PC-9 (cell line): ENCODE measurements at regions of chr1 and their contacts with region 1.

Region 1: GRCh38 chr1:212608209-212608955 is at the start of gene ATF3:
- DNase-seq: peak; percentile 89 to 99
- H3K4me3 ChIP-seq: peak within 1 kb of the TSS; percentile 96
- H3K27ac ChIP-seq: peak within 1 kb of the TSS; percentile 72
- H3K4me1 ChIP-seq: peaks cover 28% of the 10 kb centered on the region
- H3K27me3 ChIP-seq: peaks cover 57% of the 10 kb centered on the region
- CTCF ChIP-seq: no peak
- total RNA-seq, gene ATF3: 10.2 and 10.8 TPM in 2 replicates

Region 2: DNA sequence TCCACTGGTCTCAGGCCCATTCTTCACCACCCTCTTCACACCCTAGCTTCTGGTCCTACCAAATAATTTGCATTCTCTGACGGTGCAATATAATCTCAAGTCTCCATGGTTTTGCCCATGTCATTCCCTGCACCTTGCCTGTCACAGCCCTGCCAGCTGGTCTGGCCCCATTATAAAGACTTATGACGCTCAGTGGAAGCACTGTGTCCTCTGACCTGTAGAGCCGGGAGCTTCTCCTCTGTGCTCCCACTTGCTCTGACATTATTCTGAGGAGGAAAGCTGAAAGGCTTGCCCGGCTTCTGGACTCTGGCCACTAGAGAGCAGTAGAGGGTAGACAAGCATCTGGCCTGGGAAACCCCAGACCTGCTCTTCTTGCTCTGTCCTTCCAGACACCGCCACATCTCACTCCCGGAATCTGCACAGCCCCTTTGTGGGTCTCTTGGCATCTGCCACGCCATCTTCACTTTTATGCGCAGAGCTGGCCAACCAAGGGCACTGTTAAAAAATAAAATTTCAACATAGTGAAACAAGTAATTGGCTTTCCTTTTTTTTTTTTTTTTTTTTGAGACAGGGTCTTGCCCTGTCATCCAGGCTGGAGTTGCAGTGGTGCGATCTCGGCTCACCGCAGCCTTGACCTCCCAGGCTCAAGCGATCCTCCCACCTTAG is 131.2 kb before region 1 on chr1:
- CTCF ChIA-PET with region 1: interaction called, 4 read pairs
- POLR2A ChIA-PET with region 1: interaction called, 42 read pairs
- intact Hi-C with region 1: loop called (anchors 1 kb)
- DNase-seq: peak; percentile 74 to 81
- H3K4me3 ChIP-seq: no peak overlapping the region
- H3K27ac ChIP-seq: no peak overlapping the region
- H3K4me1 ChIP-seq: peaks cover 12% of the 10 kb centered on the region
- H3K27me3 ChIP-seq: no peaks in the 10 kb centered on the region
- CTCF ChIP-seq: peak; percentile 92

Region 3: DNA sequence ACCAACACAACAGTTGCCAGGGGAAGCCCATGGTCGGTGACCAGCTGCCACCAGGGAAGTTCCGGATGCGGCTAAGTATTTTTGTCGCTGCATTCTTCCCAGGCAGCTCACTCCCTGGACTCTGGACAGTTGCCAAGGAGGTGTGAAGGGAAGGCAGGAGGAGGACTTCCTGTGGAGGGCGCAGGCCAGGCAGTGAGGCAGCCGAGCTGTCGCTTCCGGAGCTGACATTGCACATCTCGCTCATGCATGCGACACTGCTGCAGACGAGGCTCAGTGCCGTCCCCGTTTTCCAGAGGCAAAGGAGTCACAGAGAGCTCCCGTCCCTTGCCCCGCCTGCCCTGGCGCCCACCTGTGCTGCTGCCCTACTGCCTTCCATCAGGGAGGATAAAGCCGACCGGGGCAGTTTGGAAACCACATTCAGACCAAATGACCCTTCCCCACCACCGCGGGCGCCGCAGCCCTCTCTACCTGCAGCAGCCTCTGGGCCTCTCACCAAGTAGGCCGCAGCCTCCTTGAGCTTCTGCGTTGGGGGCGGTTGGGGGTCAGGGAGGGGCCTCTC is 94.2 kb before region 1 on chr1:
- CTCF ChIA-PET with region 1: no interaction called
- POLR2A ChIA-PET with region 1: no interaction called
- intact Hi-C with region 1: loop called (anchors 1 kb)
- DNase-seq: peak; percentile 83 to 96
- H3K4me3 ChIP-seq: peak overlapping the region; percentile 25; the same call in 1 of the 2 replicates
- H3K27ac ChIP-seq: peak overlapping the region; percentile 76
- H3K4me1 ChIP-seq: peaks cover 28% of the 10 kb centered on the region
- H3K27me3 ChIP-seq: no peaks in the 10 kb centered on the region
- CTCF ChIP-seq: no peak; the same call in 1 of the 2 replicates

Region 4: DNA sequence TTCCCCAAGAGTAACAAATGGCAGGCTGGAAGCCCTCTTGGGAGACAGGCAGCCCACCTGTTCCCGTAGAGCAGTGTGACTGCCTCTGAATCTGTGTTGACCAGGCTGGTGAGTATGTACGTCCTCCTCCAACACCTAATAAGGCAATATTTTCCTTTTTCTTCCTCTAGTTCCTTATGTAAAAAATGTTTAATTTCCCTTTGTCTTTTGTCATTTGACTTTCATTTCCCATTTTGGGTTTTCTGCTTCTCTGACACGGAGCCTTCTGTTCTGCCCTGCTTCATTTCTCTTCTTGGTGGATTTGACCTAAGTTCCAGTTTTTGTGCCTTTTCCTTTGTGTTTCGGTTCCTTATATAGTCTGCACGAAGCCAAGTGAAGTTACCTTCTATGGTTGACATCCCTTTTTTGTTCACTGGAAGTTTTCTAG is 65.6 kb before region 1 on chr1:
- CTCF ChIA-PET with region 1: no interaction called
- POLR2A ChIA-PET with region 1: no interaction called
- intact Hi-C with region 1: no loop called
- DNase-seq: no peak
- H3K4me3 ChIP-seq: no peak overlapping the region
- H3K27ac ChIP-seq: no peak overlapping the region
- H3K4me1 ChIP-seq: no peaks in the 10 kb centered on the region
- H3K27me3 ChIP-seq: no peaks in the 10 kb centered on the region
- CTCF ChIP-seq: no peak

Region 5: GRCh38 chr1:212595787-212596714 is 12.3 kb before region 1 on chr1:
- CTCF ChIA-PET with region 1: interaction called, 3 read pairs
- POLR2A ChIA-PET with region 1: interaction called, 6 read pairs
- intact Hi-C with region 1: loop called (anchors 1 kb)
- DNase-seq: peak; percentile 61 to 99
- H3K4me3 ChIP-seq: peak overlapping the region; percentile 29
- H3K27ac ChIP-seq: peak overlapping the region; percentile 84
- H3K4me1 ChIP-seq: peaks cover 31% of the 10 kb centered on the region
- H3K27me3 ChIP-seq: 0 out of 2 replicates have a peak, but pooled peaks cover 13% of the 10 kb centered on the region
- CTCF ChIP-seq: peak; percentile 94

Region 6: GRCh38 chr1:212665241-212666115 is 57.1 kb after region 1 on chr1:
- CTCF ChIA-PET with region 1: no interaction called
- POLR2A ChIA-PET with region 1: interaction called, 16 read pairs
- intact Hi-C with region 1: loop called (anchors 1 kb)
- DNase-seq: peak; percentile 51 to 84
- H3K4me3 ChIP-seq: peak overlapping the region; percentile 53; the same call in 1 of the 2 replicates
- H3K27ac ChIP-seq: no peak overlapping the region
- H3K4me1 ChIP-seq: peaks cover 22% of the 10 kb centered on the region
- H3K27me3 ChIP-seq: no peaks in the 10 kb centered on the region
- CTCF ChIP-seq: peak; percentile 90

Region 7: DNA sequence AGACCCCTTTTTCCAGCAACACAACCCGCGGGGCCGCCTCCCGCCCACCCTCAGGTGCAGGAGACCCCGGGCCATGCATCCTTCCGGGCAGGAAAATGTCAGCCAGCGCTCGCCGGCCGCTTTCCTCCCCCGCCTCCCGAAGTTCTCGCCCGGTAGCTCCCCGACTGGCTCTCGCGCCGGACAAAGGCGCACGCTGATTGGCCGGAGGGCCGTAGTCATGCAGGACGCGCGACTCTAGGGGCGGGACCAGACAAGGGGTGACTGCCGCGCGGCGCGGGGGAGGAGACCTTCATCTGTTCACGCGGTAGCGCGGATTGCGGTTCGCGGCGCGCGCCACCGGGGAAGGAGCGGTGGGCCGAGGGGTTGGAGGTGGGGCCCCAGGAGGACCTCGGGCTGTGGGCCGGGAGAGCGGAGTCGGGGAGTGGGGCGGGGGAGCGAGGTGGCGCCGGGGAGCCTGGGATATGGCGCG is 249.6 kb after region 1 on chr1 and contains the start of gene FLVCR1:
- CTCF ChIA-PET with region 1: no interaction called
- POLR2A ChIA-PET with region 1: interaction called, 14 read pairs
- intact Hi-C with region 1: no loop called
- DNase-seq: peak; percentile 92 to 95
- H3K4me3 ChIP-seq: peak within 1 kb of the TSS; percentile 87
- H3K27ac ChIP-seq: peak within 1 kb of the TSS; percentile 57
- H3K4me1 ChIP-seq: peaks cover 36% of the 10 kb centered on the region
- H3K27me3 ChIP-seq: no peaks in the 10 kb centered on the region
- CTCF ChIP-seq: no peak; the same call in 1 of the 2 replicates
- total RNA-seq, gene FLVCR1: 5.5 and 13.1 TPM in 2 replicates